ENCODE measurements at regions of chr5 and their contacts with region 1.

Region 1: DNA sequence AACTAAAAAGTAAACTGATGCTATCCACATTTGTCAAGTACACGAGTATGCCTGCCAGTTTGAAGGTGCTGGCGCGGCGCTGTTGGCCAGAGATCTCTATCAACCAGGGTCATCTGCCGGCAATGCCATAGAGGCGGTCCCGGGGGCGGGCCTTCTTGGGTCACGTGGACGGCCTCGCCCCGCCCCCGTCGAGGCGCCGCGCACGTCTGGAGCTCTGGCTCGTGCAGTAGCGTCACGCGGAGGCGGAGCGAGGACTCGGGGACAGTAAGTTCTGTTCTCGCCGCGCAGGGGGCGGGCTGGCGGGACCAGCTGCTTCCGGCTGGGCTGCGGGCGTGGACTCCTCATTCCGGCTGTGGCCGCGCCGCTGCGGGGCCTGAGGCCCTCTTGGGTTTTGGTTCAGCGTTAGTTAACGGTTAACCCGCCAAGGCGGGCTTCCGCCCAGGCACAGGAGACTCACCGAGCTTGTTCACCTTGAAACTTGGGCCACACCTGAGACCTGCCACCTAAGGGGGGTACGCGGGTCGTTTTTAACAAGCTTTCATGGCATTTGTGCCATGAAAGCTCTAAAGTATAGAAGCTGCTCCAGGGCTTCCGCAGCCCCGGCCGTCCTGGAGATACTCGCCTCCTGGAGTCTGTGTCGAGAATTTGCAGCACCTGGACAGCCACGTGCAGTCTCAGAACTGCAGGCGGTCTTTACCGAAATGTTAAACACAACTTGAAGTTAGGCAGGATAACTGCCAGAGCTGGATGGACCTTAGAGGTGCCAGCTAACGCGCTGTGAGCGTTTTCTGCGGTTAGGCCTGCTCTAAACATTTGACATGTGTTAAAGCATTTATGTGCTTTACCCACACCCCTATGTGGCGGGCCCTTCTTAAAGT is at the start of gene RFESD:
- DNase-seq: peak; percentile 91 to 95 (median 92)
- H3K4me3 ChIP-seq: peak within 1 kb of the TSS; percentile 71 to 94
- H3K4me3 Mint-ChIP-seq: peak within 1 kb of the TSS; percentile 87 to 93 (median 89)
- H3K27ac ChIP-seq: peak within 1 kb of the TSS; percentile 84
- H3K27ac Mint-ChIP-seq: peak within 1 kb of the TSS; percentile 57 to 94 (median 93)
- H3K4me1 ChIP-seq: peaks cover 31% of the 10 kb centered on the region
- H3K4me1 Mint-ChIP-seq: peaks cover 20 to 42% (median 26%) of the 10 kb centered on the region in 4 donors
- H3K27me3 ChIP-seq: no peaks in the 10 kb centered on the region
- H3K27me3 Mint-ChIP-seq: no peaks in the 10 kb centered on the region
- total RNA-seq, gene RFESD: 9.1 to 9.3 TPM

Region 2: GRCh38 chr5:95600557-95600956 is 46.2 kb before region 1 on chr5:
- CTCF ChIA-PET with region 1: no interaction called
- POLR2A ChIA-PET with region 1: no interaction called
- intact Hi-C with region 1: no loop called
- DNase-seq: no peak
- H3K4me3 ChIP-seq: no peak overlapping the region
- H3K4me3 Mint-ChIP-seq: no peak overlapping the region
- H3K27ac ChIP-seq: no peak overlapping the region
- H3K27ac Mint-ChIP-seq: peak overlapping the region in 1 of 7 donors; percentile 28
- H3K4me1 ChIP-seq: no peaks in the 10 kb centered on the region
- H3K4me1 Mint-ChIP-seq: peaks cover 0 to 15% (median 4%) of the 10 kb centered on the region in 4 donors
- H3K27me3 ChIP-seq: no peaks in the 10 kb centered on the region
- H3K27me3 Mint-ChIP-seq: no peaks in the 10 kb centered on the region

Region 3: DNA sequence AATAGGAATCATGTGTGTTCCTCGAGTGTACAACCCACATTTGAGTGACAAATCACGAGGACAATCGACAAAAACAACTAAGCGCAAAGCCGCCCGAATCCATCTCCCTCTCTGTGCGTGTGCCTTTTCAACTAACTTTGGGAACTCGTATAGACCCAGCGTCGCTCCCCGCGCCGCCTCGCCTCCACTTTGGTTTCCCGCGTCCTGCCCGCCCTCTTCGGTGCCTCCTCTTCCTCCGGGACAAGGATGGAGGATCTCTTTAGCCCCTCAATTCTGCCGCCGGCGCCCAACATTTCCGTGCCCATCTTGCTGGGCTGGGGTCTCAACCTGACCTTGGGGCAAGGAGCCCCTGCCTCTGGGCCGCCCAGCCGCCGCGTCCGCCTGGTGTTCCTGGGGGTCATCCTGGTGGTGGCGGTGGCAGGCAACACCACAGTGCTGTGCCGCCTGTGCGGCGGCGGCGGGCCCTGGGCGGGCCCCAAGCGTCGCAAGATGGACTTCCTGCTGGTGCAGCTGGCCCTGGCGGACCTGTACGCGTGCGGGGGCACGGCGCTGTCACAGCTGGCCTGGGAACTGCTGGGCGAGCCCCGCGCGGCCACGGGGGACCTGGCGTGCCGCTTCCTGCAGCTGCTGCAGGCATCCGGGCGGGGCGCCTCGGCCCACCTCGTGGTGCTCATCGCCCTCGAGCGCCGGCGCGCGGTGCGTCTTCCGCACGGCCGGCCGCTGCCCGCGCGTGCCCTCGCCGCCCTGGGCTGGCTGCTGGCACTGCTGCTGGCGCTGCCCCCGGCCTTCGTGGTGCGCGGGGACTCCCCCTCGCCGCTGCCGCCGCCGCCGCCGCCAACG is 26.5 kb before region 1 on chr5 and contains the start of gene GPR150:
- CTCF ChIA-PET with region 1: interaction called, 89 read pairs
- POLR2A ChIA-PET with region 1: interaction called, 110 read pairs
- intact Hi-C with region 1: loop called (anchors 1 kb)
- DNase-seq: peak; percentile 58 to 72 (median 64)
- H3K4me3 ChIP-seq: peak within 1 kb of the TSS; percentile 38 to 73
- H3K4me3 Mint-ChIP-seq: peak within 1 kb of the TSS; percentile 90 to 97 (median 94)
- H3K27ac ChIP-seq: peak within 1 kb of the TSS; percentile 69
- H3K27ac Mint-ChIP-seq: peak within 1 kb of the TSS; percentile 23 to 95 (median 86)
- H3K4me1 ChIP-seq: peaks cover 72% of the 10 kb centered on the region
- H3K4me1 Mint-ChIP-seq: peaks cover 57 to 76% (median 67%) of the 10 kb centered on the region in 4 donors
- H3K27me3 ChIP-seq: no peaks in the 10 kb centered on the region
- H3K27me3 Mint-ChIP-seq: no peaks in the 10 kb centered on the region
- total RNA-seq, gene GPR150: 1.5 to 2.4 TPM

Region 4: GRCh38 chr5:95631991-95632675 is 14.7 kb before region 1 on chr5:
- CTCF ChIA-PET with region 1: interaction called, 89 read pairs
- POLR2A ChIA-PET with region 1: interaction called, 39 read pairs
- intact Hi-C with region 1: loop called (anchors 1 kb)
- DNase-seq: peak; percentile 74 to 92 (median 84)
- H3K4me3 ChIP-seq: peak overlapping the region in 1 of 2 donors; percentile 5
- H3K4me3 Mint-ChIP-seq: peak overlapping the region; percentile 36 to 80 (median 55)
- H3K27ac ChIP-seq: peak overlapping the region; percentile 56
- H3K27ac Mint-ChIP-seq: peak overlapping the region; percentile 90 to 99 (median 96)
- H3K4me1 ChIP-seq: peaks cover 15% of the 10 kb centered on the region
- H3K4me1 Mint-ChIP-seq: peaks cover 16 to 43% (median 26%) of the 10 kb centered on the region in 4 donors
- H3K27me3 ChIP-seq: no peaks in the 10 kb centered on the region
- H3K27me3 Mint-ChIP-seq: peaks cover 0 to 6% of the 10 kb centered on the region in 2 donors

Measured in CD4-positive, alpha-beta memory T cell (primary cell).